Ovary (tissue), 10 donors: ENCODE measurements at regions of chr20 and their contacts with region 1.

Region 1: DNA sequence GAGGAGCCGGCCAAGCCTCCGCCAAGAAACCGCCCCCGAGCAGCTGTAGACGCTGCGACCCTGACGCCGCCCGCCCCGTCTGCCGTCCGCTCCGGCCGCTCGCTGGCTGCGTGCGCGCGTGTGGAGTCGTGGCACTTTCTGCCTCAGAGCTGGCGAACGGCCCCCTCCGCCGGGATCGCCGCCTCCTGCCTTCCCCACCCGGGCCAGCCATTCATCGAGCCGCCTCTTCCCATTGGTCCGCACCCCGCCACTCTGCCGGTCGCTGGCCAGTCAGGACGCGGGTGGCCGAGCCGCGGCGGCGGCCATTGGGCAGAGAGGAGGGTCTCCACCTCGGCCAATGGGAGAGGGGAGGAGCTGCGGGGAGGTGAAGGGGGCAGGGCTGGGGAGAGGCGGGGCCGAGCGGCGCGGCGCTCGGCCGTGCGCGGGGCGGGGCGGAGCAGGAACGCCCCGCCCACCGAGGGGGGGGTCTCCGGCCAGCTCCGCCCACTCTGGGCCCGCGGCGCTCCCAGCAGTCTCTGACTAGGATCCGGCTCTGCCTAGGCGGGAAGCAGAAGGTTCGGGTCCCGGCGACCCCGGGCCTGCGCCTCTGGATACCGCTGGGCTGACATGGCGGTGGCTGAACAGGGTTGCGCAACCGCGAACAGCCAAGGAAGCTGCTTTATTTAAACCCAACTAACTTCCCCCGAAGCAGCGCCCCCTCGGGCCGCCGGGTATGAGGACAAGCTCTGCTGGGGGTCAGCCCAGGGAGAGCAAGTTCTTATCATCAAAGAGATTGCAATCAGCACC is at the start of gene RRBP1:
- DNase-seq: peak; percentile 98
- H3K4me3 ChIP-seq: peak within 1 kb of the TSS; percentile 66
- H3K27ac ChIP-seq: peak within 1 kb of the TSS; percentile 35 to 84
- H3K4me1 ChIP-seq: no peaks in the 10 kb centered on the region
- H3K27me3 ChIP-seq: no peaks in the 10 kb centered on the region
- CTCF ChIP-seq: peak in 2 of 3 donors; percentile 46 to 74
- EP300 ChIP-seq: no peak
- POLR2A ChIP-seq: peak; percentile 86
- total RNA-seq, gene RRBP1: 29.2 to 159 (median 96.2) TPM

Region 2: GRCh38 chr20:17536944-17537444 is 145.3 kb before region 1 on chr20:
- intact Hi-C with region 1: loop called in 1 of 4 experiments (anchors 5 kb)
- DNase-seq: peak; percentile 65 to 82 (median 74)
- H3K4me3 ChIP-seq: no peak overlapping the region
- H3K27ac ChIP-seq: no peak overlapping the region
- H3K4me1 ChIP-seq: no peaks in the 10 kb centered on the region
- H3K27me3 ChIP-seq: no peaks in the 10 kb centered on the region
- CTCF ChIP-seq: peak; percentile 90 to 99 (median 97)
- EP300 ChIP-seq: no peak
- POLR2A ChIP-seq: peak; percentile 14

Region 3: GRCh38 chr20:17806739-17807441 is 124.6 kb after region 1 on chr20:
- intact Hi-C with region 1: loop called in 2 of 4 experiments (anchors 5 to 10 kb)
- DNase-seq: peak; percentile 91 to 95 (median 92)
- H3K4me3 ChIP-seq: no peak overlapping the region
- H3K27ac ChIP-seq: peak overlapping the region; percentile 70 to 92
- H3K4me1 ChIP-seq: peaks cover 15% of the 10 kb centered on the region
- H3K27me3 ChIP-seq: no peaks in the 10 kb centered on the region
- CTCF ChIP-seq: no peak
- EP300 ChIP-seq: no peak
- POLR2A ChIP-seq: peak; percentile 6

Region 4: DNA sequence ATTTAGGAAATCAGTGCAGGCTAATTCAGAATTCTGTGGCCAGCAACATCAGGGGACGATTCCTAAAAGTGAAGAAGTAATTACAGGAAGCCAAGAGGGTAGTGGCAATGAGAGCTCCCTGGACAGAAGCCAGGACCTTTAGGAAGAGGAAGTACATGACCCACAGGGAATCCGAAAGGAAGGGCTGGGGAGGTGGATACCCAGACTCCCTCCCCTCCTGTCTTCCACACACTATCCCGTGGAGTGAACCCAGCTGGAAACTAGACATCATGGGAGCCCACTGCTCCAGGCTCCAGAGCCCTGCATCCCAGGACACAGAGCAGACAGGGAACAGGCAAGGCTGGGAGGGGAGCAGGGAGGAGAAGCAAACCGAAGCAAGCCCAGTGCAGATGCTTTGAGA is 203.2 kb after region 1 on chr20:
- intact Hi-C with region 1: loop called in 1 of 4 experiments (anchors 5 kb)
- DNase-seq: no peak
- H3K4me3 ChIP-seq: no peak overlapping the region
- H3K27ac ChIP-seq: no peak overlapping the region
- H3K4me1 ChIP-seq: peaks cover 3% of the 10 kb centered on the region
- H3K27me3 ChIP-seq: no peaks in the 10 kb centered on the region
- CTCF ChIP-seq: no peak
- EP300 ChIP-seq: no peak
- POLR2A ChIP-seq: no peak

Region 5: DNA sequence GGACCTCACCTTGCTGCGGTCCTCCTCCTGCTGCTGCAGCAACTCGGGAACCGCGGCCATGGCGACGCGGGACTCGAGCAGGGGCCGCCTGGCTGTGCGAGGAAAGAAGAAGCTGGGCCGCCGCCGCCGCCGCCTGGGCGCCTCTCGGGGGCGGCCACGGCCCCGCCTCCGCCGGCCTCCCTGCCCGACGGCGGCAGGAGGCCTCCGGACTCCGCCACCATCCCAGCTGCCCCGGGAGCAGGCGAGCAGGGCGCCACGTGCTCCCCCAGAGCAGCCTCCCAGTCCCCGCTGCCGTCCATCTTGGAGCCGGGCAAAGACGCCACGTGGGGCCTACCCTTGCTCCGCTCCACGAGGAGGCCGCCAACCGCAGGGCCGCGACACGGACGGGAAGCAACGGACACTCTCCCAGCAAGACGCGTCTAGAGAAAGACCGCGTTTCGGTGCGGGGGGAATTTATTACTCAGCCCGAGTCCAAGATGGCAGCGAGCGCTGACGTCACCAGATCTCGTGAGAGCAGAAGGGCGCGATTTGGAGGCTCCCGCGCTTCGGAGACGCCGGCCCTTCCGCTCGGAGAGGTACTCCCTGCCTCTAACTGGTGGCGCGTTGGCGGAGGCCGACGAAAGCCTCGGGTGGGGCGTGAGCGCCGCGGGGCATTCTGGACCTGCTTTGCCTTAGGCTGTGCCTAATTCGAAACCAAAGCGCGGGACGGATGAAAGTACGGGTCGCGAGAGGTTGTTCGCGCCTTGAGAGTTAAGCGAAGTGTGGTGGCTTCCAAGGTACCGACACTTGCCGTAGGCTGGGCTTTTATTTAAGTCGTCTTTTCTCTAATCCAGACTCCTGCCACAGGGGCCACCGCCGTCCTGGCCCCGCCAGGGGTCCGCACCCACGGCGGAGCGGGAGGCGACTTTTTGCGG is 286.3 kb after region 1 on chr20 and contains the starts of genes MGME1 and SNX5:
- intact Hi-C with region 1: loop called in 1 of 4 experiments (anchors 5 kb)
- DNase-seq: peak; percentile 99
- H3K4me3 ChIP-seq: peak within 1 kb of the TSS; percentile 55
- H3K27ac ChIP-seq: peak within 1 kb of the TSS; percentile 97 to 98
- H3K4me1 ChIP-seq: peaks cover 18% of the 10 kb centered on the region
- H3K27me3 ChIP-seq: no peaks in the 10 kb centered on the region
- CTCF ChIP-seq: peak in 1 of 3 donors; percentile 10
- EP300 ChIP-seq: peak; percentile 81
- POLR2A ChIP-seq: no peak
- total RNA-seq, gene MGME1: 5.1 to 11.9 (median 8.3) TPM
- total RNA-seq, gene SNX5: 74.2 to 138 (median 101) TPM